Common myeloid progenitor, CD34-positive (primary cell): ENCODE measurements at regions of chr16 and their contacts with region 1.

Region 1: DNA sequence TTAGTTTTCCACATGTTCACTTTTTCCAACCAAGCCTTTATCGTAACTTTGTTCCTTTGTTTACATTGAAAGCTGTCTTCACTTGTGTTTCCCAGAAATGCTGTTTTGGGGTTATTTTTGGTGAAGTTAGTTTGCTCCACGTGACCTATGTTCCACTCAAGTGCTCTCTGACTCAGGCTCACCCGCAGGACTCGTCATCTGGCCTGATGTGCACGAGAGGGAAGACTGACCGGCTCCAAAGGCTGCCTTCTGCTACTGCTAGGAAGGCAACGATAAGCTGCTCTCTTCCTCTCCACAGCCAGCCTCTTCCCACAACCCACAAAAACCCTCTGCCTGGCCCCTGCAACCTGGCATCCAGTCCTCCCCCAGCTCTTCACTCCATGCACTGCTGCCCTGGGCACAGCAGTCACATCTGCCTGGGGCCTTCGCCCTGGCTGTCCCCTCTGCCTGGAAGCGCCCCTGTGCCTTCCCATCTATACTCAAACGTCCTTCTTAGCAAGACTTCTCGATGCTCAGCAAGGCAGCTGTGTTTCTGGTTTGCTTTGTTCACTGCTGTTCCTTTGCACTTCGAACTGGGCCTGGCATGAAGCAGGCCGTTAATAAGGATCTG is 28.0 kb downstream of the ZCCHC14 start:
- DNase-seq: peak; percentile 68 to 91 (median 86)
- H3K4me3 ChIP-seq: peak overlapping the region in 6 of 7 experiments; percentile 16 to 64 (median 50)
- H3K27ac ChIP-seq: peak overlapping the region; percentile 51 to 78
- H3K4me1 ChIP-seq: peaks cover 14 to 72% (median 56%) of the 10 kb centered on the region in 4 experiments
- H3K27me3 ChIP-seq: no peaks in the 10 kb centered on the region

Region 2: GRCh38 chr16:87490096-87490798 is 25.5 kb after region 1 on chr16:
- CTCF ChIA-PET with region 1: interaction called, 6 read pairs
- POLR2A ChIA-PET with region 1: interaction called, 11 read pairs
- DNase-seq: peak in 1 of 3 donors; percentile 36
- H3K4me3 ChIP-seq: peak overlapping the region in 5 of 7 experiments; percentile 23 to 70 (median 57)
- H3K27ac ChIP-seq: no peak overlapping the region
- H3K4me1 ChIP-seq: peaks cover 0 to 37% (median 35%) of the 10 kb centered on the region in 4 experiments
- H3K27me3 ChIP-seq: peaks cover 0 to 4% (median 0%) of the 10 kb centered on the region in 5 experiments